Sigmoid colon (tissue), 7 donors: ENCODE measurements at regions of chr13 and their contacts with region 1.

Region 1: GRCh38 chr13:51222037-51222685 is at the start of gene FAM124A:
- DNase-seq: peak; percentile 75
- H3K4me3 ChIP-seq: peak within 1 kb of the TSS; percentile 71 to 97 (median 92)
- H3K27ac ChIP-seq: peak within 1 kb of the TSS; percentile 77 to 93 (median 88)
- H3K4me1 ChIP-seq: peaks cover 0 to 44% (median 35%) of the 10 kb centered on the region in 4 donors
- H3K27me3 ChIP-seq: no peaks in the 10 kb centered on the region
- CTCF ChIP-seq: no peak
- EP300 ChIP-seq: no peak
- POLR2A ChIP-seq: no peak
- total RNA-seq, gene FAM124A: 11.7 to 18.3 (median 16.3) TPM

Region 2: DNA sequence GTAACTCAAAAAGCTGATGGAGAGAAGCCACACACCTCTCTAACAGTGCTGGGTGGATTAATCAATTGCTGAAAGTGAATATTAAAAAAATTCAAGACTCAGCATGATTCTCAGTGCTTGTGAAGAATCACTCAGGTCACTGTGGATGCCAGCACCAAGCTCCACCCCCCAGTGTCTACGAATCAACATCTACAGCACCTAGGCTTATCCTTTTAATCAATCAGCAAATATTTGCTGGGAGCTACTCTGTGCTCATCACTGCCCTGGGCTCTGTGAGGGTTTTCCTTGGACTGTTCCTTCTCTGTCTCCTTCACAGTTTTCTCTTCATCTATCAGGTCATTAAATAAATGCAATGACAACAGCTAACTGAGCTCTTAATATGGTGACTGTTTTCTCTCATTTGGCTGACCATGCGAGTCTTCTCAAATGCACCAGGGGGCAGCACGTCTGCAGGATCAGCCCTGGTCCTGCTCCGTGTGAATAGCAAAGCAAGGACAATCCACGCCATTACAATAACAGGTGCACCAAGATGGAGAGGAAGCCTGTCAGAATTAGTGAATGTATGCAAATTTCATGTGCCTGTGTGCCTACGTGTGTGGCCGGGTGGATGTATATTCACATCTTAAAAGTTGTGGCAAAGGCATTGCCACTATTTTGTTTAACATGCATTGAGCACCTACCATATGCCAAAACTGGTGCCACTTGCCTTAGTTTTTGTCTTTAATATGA is 96.5 kb before region 1 on chr13:
- intact Hi-C with region 1: no loop called
- DNase-seq: peak; percentile 72
- H3K4me3 ChIP-seq: no peak overlapping the region
- H3K27ac ChIP-seq: no peak overlapping the region
- H3K4me1 ChIP-seq: no peaks in the 10 kb centered on the region
- H3K27me3 ChIP-seq: no peaks in the 10 kb centered on the region
- CTCF ChIP-seq: peak; percentile 52 to 61 (median 55)
- EP300 ChIP-seq: no peak
- POLR2A ChIP-seq: no peak

Region 3: DNA sequence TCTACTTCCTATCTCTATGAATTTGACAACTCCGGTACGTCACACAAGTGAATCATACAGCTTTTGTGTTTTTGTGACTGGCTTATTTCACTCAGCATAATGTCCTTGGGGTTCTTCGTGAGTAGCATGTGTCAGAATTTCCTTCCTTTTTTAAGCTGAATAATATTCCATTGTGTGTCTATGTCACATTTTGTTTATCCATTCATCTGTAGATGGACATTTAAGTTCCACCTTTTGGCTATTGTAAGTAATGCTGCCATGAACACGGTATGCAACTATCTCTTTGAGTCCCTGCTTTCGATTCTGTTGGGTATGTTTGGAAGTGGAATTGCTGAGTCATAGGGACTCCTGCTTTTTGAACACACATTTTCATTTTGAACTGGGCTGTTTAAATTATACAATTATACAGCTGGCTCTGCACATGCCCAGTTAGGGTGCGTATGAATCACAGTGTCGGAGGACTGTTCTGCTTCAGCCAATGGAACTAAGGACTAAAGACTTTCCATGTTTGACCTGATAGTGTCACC is 68.1 kb before region 1 on chr13:
- intact Hi-C with region 1: loop called (anchors 5 kb)
- DNase-seq: no peak
- H3K4me3 ChIP-seq: no peak overlapping the region
- H3K27ac ChIP-seq: peak overlapping the region in 2 of 4 donors; percentile 33 to 36
- H3K4me1 ChIP-seq: peaks cover 0 to 12% (median 7%) of the 10 kb centered on the region in 4 donors
- H3K27me3 ChIP-seq: no peaks in the 10 kb centered on the region
- CTCF ChIP-seq: no peak
- EP300 ChIP-seq: no peak
- POLR2A ChIP-seq: no peak

Region 4: GRCh38 chr13:51278426-51279130 is 56.4 kb after region 1 on chr13:
- intact Hi-C with region 1: loop called (anchors 2 kb)
- DNase-seq: no peak
- H3K4me3 ChIP-seq: no peak overlapping the region
- H3K27ac ChIP-seq: peak overlapping the region in 3 of 4 donors; percentile 69 to 80 (median 79)
- H3K4me1 ChIP-seq: peaks cover 0 to 65% (median 45%) of the 10 kb centered on the region in 4 donors
- H3K27me3 ChIP-seq: no peaks in the 10 kb centered on the region
- CTCF ChIP-seq: peak in 2 of 4 experiments; percentile 0 to 7
- EP300 ChIP-seq: no peak
- POLR2A ChIP-seq: no peak

Region 5: GRCh38 chr13:51286135-51287002 is 64.2 kb after region 1 on chr13:
- intact Hi-C with region 1: loop called (anchors 1 kb)
- DNase-seq: peak; percentile 87
- H3K4me3 ChIP-seq: no peak overlapping the region
- H3K27ac ChIP-seq: no peak overlapping the region
- H3K4me1 ChIP-seq: peaks cover 0 to 25% (median 11%) of the 10 kb centered on the region in 4 donors
- H3K27me3 ChIP-seq: no peaks in the 10 kb centered on the region
- CTCF ChIP-seq: peak; percentile 82 to 93 (median 88)
- EP300 ChIP-seq: no peak
- POLR2A ChIP-seq: no peak

Region 6: GRCh38 chr13:51803422-51804294 is 581.5 kb after region 1 on chr13 and contains the start of gene DHRS12:
- intact Hi-C with region 1: loop called (anchors 5 kb)
- DNase-seq: peak; percentile 97
- H3K4me3 ChIP-seq: peak within 1 kb of the TSS; percentile 52 to 83 (median 67)
- H3K27ac ChIP-seq: peak within 1 kb of the TSS; percentile 91 to 99 (median 97)
- H3K4me1 ChIP-seq: peaks cover 0 to 54% (median 45%) of the 10 kb centered on the region in 4 donors
- H3K27me3 ChIP-seq: no peaks in the 10 kb centered on the region
- CTCF ChIP-seq: no peak
- EP300 ChIP-seq: peak in 2 of 4 donors; percentile 31 to 45
- POLR2A ChIP-seq: peak; percentile 83 to 86
- total RNA-seq, gene DHRS12: 11.4 to 26.9 (median 14.9) TPM